AG04449 (cell line): ENCODE measurements at regions of chr7 and their contacts with region 1.

Region 1: DNA sequence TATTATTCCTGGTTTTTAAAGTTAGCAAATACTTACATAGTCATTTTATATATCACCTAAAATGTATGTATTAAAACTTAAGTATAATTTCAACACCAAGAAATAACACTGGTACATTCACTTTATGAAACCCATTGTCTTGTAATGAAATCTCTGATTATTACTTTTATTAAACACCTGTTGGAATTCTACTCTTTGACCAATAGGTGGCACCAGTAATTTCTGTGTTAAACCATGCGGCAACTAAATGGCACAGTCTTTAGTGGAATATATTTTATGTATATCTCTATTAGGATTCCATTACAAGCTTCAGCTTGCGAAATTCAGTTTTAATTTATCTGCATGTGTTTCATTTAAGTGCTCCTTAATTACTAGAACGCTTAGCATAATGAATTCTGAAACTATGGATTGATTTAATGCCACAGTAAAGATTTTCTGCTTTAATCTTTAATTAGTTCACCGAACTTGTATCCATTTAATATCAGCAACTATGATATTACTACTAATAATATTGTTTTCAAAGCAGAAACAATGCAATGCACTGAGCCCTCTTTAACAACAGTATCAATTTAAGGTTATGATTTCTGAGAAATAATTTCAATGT is 181.3 kb downstream of the MAGI2 start:
- DNase-seq: no peak
- H3K4me3 ChIP-seq: no peak overlapping the region
- CTCF ChIP-seq: peak; percentile 38

Region 2: DNA sequence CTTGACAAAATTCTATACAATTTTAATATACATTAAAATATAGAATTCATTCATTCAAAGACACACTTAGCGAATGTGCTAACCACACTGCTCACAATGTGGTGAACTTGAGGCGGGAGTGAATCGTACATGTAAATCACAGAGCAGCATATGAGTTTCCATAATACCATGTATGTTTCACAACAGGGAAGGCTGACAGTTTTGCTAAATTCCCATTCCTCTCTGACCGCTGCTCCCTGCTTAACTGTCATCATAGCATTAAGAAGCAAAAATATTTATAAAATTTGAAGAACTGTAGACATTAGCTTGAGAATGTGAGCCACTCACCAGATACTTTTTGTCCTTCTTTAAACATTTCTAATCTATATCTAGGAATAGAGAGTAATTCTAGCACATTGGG is 582.0 kb before region 1 on chr7:
- CTCF ChIA-PET with region 1: no interaction called
- POLR2A ChIA-PET with region 1: no interaction called
- DNase-seq: no peak
- H3K4me3 ChIP-seq: no peak overlapping the region
- CTCF ChIP-seq: no peak

Region 3: GRCh38 chr7:79282063-79282694 is 10.0 kb after region 1 on chr7:
- CTCF ChIA-PET with region 1: interaction called, 43 read pairs
- POLR2A ChIA-PET with region 1: no interaction called
- DNase-seq: peak; percentile 29
- H3K4me3 ChIP-seq: peak overlapping the region; percentile 19
- CTCF ChIP-seq: peak; percentile 56